ENCODE measurements at regions of chr15 and their contacts with region 1.

Region 1: DNA sequence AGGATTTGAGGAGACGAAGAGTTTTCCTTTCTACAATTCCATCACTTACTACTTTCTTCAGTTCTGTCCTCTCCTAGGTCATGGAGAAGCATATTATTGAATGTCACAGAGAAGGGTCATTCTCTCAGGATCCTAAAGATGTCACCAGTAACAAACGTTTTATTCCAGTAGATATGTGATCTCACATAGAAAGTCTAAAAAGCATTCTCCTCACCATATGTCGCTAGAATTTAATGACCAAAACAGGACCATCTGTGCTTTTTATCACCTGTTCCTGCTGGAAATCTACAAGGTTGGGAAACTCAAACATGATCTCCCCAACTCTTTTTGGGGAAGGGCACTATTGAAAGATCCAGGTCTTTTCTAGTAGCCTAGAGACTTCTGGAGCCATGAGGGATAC is 24.0 kb upstream of the FRMD5 start:
- DNase-seq: no peak
- H3K4me3 ChIP-seq: no peak overlapping the region
- H3K27ac ChIP-seq: peak overlapping the region in 1 of 2 experiments; percentile 26; a peak in 1 of 4 replicates
- H3K4me1 ChIP-seq: peaks cover 0 to 15% of the 10 kb centered on the region in 2 experiments; a peak in 3 of 4 replicates
- H3K27me3 ChIP-seq: no peaks in the 10 kb centered on the region
- CTCF ChIP-seq: no peak
- EP300 ChIP-seq: no peak
- RAD21 ChIP-seq: 0 out of 2 replicates have a peak, but pooled peaks have one; percentile 3

Region 2: GRCh38 chr15:43872416-43873020 is 346.6 kb before region 1 on chr15:
- CTCF ChIA-PET with region 1: interaction called, 11 read pairs
- POLR2A ChIA-PET with region 1: no interaction called
- DNase-seq: peak; percentile 62
- H3K4me3 ChIP-seq: no peak overlapping the region; a peak in 1 of 4 replicates
- H3K27ac ChIP-seq: no peak overlapping the region
- H3K4me1 ChIP-seq: no peaks in the 10 kb centered on the region; a peak in 1 of 4 replicates
- H3K27me3 ChIP-seq: no peaks in the 10 kb centered on the region
- CTCF ChIP-seq: peak; percentile 79
- EP300 ChIP-seq: no peak
- RAD21 ChIP-seq: peak; percentile 87